RWPE1 (cell line): ENCODE measurements at regions of chr19 and their contacts with region 1.

Region 1: DNA sequence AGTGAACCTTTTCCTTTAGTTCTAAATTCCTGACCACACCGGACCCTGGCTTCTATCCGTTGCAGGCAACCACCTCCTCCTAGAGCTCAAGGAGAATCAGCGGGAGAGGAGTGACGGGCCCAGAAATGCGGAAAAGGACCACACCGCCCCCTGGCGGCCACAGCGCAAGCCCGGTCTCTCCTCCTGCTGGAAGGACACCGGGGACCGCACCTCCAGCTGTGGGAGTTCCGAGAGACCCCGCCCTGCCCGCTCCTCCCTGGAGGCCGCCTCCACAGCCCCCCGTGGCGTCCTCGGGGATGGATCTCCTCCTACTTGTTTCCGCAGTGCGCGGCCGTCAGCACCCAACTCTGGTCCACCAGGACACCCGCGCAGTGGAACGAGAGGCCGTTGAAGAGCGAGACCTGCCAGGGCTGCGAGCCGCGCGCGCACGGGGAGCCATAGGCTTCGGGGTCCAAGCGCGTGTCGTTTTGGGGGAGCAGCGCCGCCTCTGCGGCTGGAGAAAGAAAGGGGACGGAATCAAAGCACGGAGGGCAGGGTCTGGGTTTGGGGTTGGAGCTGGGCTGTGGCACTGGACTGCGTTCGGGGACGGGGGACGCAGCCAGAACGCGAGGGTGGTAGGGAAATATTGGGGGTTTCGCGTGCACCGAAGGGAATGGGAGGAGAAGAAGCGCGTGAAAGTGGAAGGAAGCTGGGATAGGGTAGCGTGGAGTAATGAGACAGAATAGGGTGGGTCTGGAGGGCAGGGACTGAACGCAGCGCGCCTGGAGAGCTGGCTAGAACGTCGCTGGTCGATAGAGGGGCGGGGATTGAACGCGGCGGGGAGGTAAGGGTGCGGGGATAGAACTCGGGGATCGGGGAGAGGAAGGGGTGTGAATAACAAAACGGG is 2.5 kb downstream of the KLK10 start:
- DNase-seq: peak; percentile 90
- H3K27ac ChIP-seq: no peak overlapping the region
- CTCF ChIP-seq: peak; percentile 82

Region 2: DNA sequence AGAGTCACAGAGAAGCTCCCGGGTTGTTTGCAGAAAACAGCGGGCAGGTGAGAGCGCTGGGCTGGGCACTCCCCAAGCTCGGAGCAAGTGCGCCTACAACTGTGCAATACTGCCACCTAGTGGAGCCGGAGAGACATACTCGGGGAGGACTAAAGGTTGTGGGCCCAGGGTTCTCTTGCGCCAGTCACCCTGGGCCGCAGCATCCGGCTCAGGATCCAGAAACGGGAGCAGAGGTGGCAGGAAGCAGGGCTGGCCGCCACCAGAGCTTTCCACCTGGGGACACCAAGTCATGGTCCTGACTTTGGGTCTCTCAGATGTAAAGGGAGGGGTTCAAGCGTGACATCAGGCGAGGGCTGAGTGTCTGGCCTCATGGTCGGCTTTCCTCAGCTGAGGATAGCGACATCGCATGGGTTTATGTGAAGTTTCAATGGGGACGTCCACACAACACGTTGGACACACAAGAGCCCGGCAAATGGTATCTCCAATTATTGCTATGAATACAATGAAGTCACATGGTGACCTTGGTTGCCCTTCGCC is 94.7 kb before region 1 on chr19:
- CTCF ChIA-PET with region 1: interaction called, 20 read pairs
- POLR2A ChIA-PET with region 1: no interaction called
- DNase-seq: peak; percentile 84
- H3K27ac ChIP-seq: no peak overlapping the region
- CTCF ChIP-seq: peak; percentile 81

Region 3: GRCh38 chr19:50933640-50934039 is 83.4 kb before region 1 on chr19:
- CTCF ChIA-PET with region 1: interaction called, 10 read pairs
- POLR2A ChIA-PET with region 1: interaction called, 3 read pairs
- DNase-seq: peak; percentile 53
- H3K27ac ChIP-seq: peak overlapping the region; percentile 70
- CTCF ChIP-seq: no peak

Region 4: GRCh38 chr19:50944795-50945194 is 72.2 kb before region 1 on chr19:
- CTCF ChIA-PET with region 1: interaction called, 15 read pairs
- POLR2A ChIA-PET with region 1: no interaction called
- DNase-seq: no peak
- H3K27ac ChIP-seq: no peak overlapping the region
- CTCF ChIP-seq: no peak

Region 5: GRCh38 chr19:50994129-50994528 is 22.9 kb before region 1 on chr19:
- CTCF ChIA-PET with region 1: no interaction called
- POLR2A ChIA-PET with region 1: no interaction called
- DNase-seq: no peak
- H3K27ac ChIP-seq: no peak overlapping the region
- CTCF ChIP-seq: no peak

Region 6: DNA sequence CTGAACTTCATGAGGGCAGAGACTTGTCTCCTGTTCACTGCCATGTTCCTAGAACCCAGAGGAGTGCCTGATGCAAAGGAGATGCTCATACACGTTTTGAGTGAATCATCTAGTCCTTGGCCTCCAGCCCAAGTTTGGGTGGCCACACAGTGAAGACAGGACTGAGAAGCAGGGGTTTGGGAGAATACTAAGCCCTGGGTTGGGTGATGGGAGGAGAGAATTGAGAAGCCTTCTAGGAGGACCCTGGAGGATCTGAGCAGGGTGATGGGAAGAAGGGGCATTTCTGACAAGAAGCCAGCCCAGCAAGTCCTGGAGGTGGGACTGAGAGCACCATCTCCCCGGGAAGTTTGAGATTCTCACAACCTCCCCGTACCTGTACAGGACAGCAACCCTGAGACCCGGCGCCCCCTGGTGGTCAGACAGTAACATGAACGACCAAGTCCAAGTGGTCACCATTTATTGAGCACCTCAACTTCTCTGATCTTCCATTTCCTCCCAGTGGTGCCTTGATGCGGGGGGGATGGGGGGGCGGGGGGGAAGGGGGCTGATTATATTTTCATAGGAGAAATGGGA is 80.2 kb after region 1 on chr19:
- CTCF ChIA-PET with region 1: interaction called, 64 read pairs
- POLR2A ChIA-PET with region 1: interaction called, 9 read pairs
- DNase-seq: peak; percentile 80
- H3K27ac ChIP-seq: peak overlapping the region; percentile 59
- CTCF ChIP-seq: peak; percentile 60